CD4-positive, alpha-beta memory T cell (primary cell): ENCODE measurements at regions of chr11 and their contacts with region 1.

Region 1: DNA sequence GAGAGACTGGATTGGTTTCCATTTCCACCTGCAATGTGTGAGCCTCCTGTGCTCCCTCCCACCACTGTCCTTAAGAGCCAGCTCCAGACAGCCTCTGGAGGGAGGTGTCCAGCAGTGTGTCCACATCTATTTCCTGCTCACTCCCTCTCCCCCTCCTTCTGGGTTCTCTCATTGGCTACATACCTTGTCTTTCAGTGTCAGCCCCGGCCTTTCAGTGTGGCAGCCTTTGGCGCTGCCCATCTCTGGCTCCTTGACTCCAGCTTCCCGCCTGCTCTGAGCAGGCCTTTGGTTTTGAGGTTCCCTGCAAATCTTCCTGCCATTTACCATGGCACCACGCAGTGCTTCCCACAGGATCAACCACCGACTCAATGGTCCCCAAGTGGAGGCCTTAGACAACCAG is 19.0 kb upstream of the PTPRJ start:
- DNase-seq: no peak
- H3K4me3 ChIP-seq: no peak overlapping the region
- H3K4me3 Mint-ChIP-seq: no peak overlapping the region
- H3K27ac ChIP-seq: no peak overlapping the region
- H3K27ac Mint-ChIP-seq: no peak overlapping the region
- H3K4me1 ChIP-seq: no peaks in the 10 kb centered on the region
- H3K4me1 Mint-ChIP-seq: no peaks in the 10 kb centered on the region
- H3K27me3 ChIP-seq: no peaks in the 10 kb centered on the region
- H3K27me3 Mint-ChIP-seq: no peaks in the 10 kb centered on the region

Region 2: GRCh38 chr11:47938791-47939560 is 22.4 kb before region 1 on chr11:
- CTCF ChIA-PET with region 1: interaction called, 25 read pairs
- POLR2A ChIA-PET with region 1: no interaction called
- intact Hi-C with region 1: no loop called
- DNase-seq: no peak
- H3K4me3 ChIP-seq: no peak overlapping the region
- H3K4me3 Mint-ChIP-seq: no peak overlapping the region
- H3K27ac ChIP-seq: no peak overlapping the region
- H3K27ac Mint-ChIP-seq: no peak overlapping the region
- H3K4me1 ChIP-seq: peaks cover 13% of the 10 kb centered on the region
- H3K4me1 Mint-ChIP-seq: peaks cover 10 to 16% (median 13%) of the 10 kb centered on the region in 4 donors
- H3K27me3 ChIP-seq: no peaks in the 10 kb centered on the region
- H3K27me3 Mint-ChIP-seq: no peaks in the 10 kb centered on the region

Region 3: DNA sequence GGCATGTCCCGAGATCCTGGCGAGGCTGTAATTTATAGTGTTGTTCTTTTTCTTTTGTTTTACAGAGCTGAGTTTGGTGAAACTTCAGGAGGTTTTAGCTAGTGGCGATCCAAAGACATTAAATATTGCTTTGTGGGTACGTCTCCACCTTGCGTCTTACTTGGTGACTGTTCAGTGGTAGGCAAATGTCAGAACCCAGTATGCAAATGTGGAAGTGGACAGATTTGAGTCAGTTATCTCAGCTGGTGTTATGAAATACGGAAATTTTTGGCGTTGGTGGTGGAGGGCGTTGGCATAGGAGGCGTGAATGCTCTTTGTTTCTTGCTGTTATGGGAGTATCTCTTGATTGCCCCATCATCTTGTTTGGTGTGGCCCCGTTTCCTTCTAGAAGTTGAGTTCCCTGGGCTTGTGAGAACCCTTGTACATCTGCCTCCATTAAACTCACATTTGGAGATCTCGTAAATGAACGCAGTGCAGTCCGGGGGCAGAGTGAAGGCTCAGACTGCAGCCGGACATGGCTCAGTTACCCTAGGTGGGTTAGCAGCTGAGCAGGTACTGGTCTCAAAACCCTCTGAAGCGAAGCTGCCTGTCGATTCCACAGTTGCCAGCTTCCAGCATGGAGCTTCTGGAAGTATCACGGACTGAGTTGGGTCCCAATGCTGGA is 58.8 kb after region 1 on chr11:
- CTCF ChIA-PET with region 1: interaction called, 28 read pairs
- POLR2A ChIA-PET with region 1: no interaction called
- intact Hi-C with region 1: no loop called
- DNase-seq: peak; percentile 58 to 74 (median 59)
- H3K4me3 ChIP-seq: peak overlapping the region in 1 of 2 donors; percentile 17
- H3K4me3 Mint-ChIP-seq: peak overlapping the region; percentile 21 to 85 (median 70)
- H3K27ac ChIP-seq: peak overlapping the region; percentile 59
- H3K27ac Mint-ChIP-seq: peak overlapping the region; percentile 75 to 93 (median 84)
- H3K4me1 ChIP-seq: peaks cover 62% of the 10 kb centered on the region
- H3K4me1 Mint-ChIP-seq: peaks cover 54 to 77% (median 65%) of the 10 kb centered on the region in 4 donors
- H3K27me3 ChIP-seq: no peaks in the 10 kb centered on the region
- H3K27me3 Mint-ChIP-seq: no peaks in the 10 kb centered on the region